ENCODE measurements at regions of chr2 and their contacts with region 1.

Region 1: GRCh38 chr2:160109936-160110673 is 47.7 kb upstream of the PLA2R1 start:
- DNase-seq: peak; percentile 61
- ATAC-seq: peak; percentile 77
- H3K4me3 Mint-ChIP-seq: no peak overlapping the region
- H3K27ac Mint-ChIP-seq: no peak overlapping the region
- H3K4me1 Mint-ChIP-seq: peaks cover 16% of the 10 kb centered on the region
- H3K27me3 Mint-ChIP-seq: no peaks in the 10 kb centered on the region; the same call in 1 of the 2 replicates
- CTCF ChIP-seq: peak; percentile 73

Region 2: GRCh38 chr2:160157861-160158829 is 48.0 kb after region 1 on chr2:
- CTCF ChIA-PET with region 1: no interaction called
- POLR2A ChIA-PET with region 1: no interaction called
- DNase-seq: no peak
- ATAC-seq: peak; percentile 83
- H3K4me3 Mint-ChIP-seq: no peak overlapping the region
- H3K27ac Mint-ChIP-seq: peak overlapping the region; percentile 64
- H3K4me1 Mint-ChIP-seq: peaks cover 14% of the 10 kb centered on the region
- H3K27me3 Mint-ChIP-seq: no peaks in the 10 kb centered on the region; the same call in 1 of the 2 replicates
- CTCF ChIP-seq: no peak

Region 3: DNA sequence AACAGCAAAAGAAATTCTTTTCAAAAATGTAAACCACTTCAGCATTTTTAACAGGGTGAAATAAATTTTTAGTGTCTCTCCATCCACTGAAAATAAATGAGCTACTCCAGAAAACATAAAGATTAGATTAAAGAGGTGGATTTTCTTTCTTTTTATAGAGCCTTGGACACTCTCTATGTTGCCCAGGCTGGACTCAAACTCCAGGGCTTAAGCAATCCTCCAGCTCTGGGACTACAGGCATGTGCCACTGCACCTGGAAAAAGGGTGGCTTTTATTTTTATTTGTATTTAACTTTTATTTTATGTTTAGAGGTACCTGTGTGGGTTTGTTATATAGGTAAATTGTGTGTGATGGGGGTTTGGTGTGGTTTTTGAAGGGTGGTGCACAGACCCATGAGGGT is 70.1 kb after region 1 on chr2:
- CTCF ChIA-PET with region 1: interaction called, 10 read pairs
- POLR2A ChIA-PET with region 1: no interaction called
- DNase-seq: no peak
- ATAC-seq: no peak
- H3K4me3 Mint-ChIP-seq: no peak overlapping the region
- H3K27ac Mint-ChIP-seq: no peak overlapping the region
- H3K4me1 Mint-ChIP-seq: peaks cover 13% of the 10 kb centered on the region
- H3K27me3 Mint-ChIP-seq: no peaks in the 10 kb centered on the region
- CTCF ChIP-seq: no peak

Region 4: GRCh38 chr2:160252278-160252887 is 142.3 kb after region 1 on chr2:
- CTCF ChIA-PET with region 1: interaction called, 11 read pairs
- POLR2A ChIA-PET with region 1: no interaction called
- DNase-seq: no peak
- ATAC-seq: peak; percentile 18; the same call in 1 of the 2 replicates
- H3K4me3 Mint-ChIP-seq: no peak overlapping the region
- H3K27ac Mint-ChIP-seq: no peak overlapping the region
- H3K4me1 Mint-ChIP-seq: 0 out of 2 replicates have a peak, but pooled peaks cover 5% of the 10 kb centered on the region
- H3K27me3 Mint-ChIP-seq: no peaks in the 10 kb centered on the region
- CTCF ChIP-seq: peak; percentile 54; the same call in 1 of the 2 replicates

Region 5: DNA sequence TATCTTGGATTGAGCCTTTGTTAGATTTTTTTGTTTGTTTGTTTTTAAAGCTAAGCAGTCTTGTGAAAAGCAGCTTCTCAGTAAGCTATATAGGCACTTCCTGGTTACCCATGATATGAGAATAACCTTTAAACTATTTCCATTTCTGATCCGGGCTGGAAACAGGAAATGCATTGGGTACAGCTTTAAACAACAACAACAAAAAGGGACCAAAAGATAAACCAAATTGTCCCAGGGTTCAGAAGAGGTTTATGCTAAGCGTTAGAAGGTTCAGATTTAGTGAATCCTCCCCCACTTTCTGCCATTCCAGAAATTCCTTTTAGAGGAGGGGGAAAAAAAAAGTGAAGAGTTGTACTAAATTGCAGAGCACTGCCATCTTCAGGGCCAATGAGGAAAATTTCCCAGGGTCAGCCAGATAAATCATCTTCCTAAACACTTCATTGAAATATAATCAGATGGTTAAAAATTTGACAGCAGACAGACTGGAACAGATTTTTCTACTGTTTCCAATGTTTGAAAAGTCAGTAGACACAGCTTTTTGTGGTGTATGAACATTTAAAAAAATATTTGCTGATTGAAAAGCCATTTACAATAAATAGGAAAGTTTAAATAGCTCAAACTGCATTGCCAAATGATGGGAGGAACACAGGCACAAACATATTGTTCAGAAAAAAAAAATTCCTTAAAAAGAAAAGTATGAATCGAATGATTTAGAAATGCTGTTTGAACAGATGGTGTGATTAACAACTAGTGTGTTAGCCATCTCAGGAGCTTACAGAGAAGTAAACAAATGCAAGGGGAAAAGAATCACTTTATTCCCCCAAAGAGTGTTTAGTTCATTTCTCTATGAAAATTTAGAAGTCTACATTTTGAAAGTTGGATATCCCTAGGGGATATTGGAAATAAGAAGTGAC is 860.2 kb after region 1 on chr2:
- CTCF ChIA-PET with region 1: interaction called, 10 read pairs
- POLR2A ChIA-PET with region 1: no interaction called
- DNase-seq: peak; percentile 29
- ATAC-seq: peak; percentile 91
- H3K4me3 Mint-ChIP-seq: no peak overlapping the region
- H3K27ac Mint-ChIP-seq: peak overlapping the region; percentile 94
- H3K4me1 Mint-ChIP-seq: peaks cover 8% of the 10 kb centered on the region
- H3K27me3 Mint-ChIP-seq: no peaks in the 10 kb centered on the region; the same call in 1 of the 2 replicates
- CTCF ChIP-seq: no peak

Region 6: GRCh38 chr2:161004379-161004778 is 894.3 kb after region 1 on chr2:
- CTCF ChIA-PET with region 1: interaction called, 11 read pairs
- POLR2A ChIA-PET with region 1: no interaction called
- DNase-seq: no peak
- ATAC-seq: no peak
- H3K4me3 Mint-ChIP-seq: no peak overlapping the region
- H3K27ac Mint-ChIP-seq: no peak overlapping the region
- H3K4me1 Mint-ChIP-seq: peaks cover 9% of the 10 kb centered on the region
- H3K27me3 Mint-ChIP-seq: no peaks in the 10 kb centered on the region
- CTCF ChIP-seq: no peak